HEK293 (cell line): ENCODE measurements at regions of chr3 and their contacts with region 1.

Region 1: GRCh38 chr3:14921078-14921616 is 26.2 kb upstream of the NR2C2 start:
- H3K4me3 ChIP-seq: no peak overlapping the region
- H3K27ac ChIP-seq: no peak overlapping the region
- H3K4me1 ChIP-seq: no peaks in the 10 kb centered on the region
- CTCF ChIP-seq: peak; percentile 98

Region 2: DNA sequence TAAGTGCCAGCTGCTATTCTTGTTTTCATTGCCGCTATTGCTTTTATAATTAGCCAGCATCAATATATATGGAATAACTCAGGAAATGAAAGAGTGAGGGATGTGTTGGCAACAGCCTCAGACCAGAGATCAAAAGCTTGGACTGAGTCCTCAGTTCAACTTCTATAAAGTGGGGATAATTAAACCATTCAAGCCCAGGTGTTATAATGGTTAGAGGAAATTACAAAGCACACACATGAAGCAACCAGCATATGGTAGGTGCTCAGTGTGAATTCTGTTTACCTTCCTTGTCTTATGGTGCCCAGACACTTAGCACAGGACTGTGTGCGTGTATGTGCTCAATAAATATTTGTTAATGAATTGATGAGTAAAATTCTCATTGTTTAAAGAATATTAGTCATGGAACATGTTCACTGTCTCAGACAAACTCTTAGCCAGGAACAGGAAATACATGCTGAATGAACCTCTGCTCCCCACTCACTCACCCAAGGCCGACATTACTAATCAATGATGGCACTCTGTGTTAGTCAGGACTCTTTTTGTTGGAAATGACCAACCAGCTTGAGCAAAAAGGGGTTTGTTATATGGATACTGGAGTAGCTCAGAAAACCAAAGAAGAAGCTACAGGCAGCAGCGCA is 286.3 kb before region 1 on chr3:
- CTCF ChIA-PET with region 1: interaction called, 15 read pairs
- POLR2A ChIA-PET with region 1: no interaction called
- H3K4me3 ChIP-seq: no peak overlapping the region
- H3K27ac ChIP-seq: no peak overlapping the region
- H3K4me1 ChIP-seq: no peaks in the 10 kb centered on the region
- CTCF ChIP-seq: no peak

Region 3: DNA sequence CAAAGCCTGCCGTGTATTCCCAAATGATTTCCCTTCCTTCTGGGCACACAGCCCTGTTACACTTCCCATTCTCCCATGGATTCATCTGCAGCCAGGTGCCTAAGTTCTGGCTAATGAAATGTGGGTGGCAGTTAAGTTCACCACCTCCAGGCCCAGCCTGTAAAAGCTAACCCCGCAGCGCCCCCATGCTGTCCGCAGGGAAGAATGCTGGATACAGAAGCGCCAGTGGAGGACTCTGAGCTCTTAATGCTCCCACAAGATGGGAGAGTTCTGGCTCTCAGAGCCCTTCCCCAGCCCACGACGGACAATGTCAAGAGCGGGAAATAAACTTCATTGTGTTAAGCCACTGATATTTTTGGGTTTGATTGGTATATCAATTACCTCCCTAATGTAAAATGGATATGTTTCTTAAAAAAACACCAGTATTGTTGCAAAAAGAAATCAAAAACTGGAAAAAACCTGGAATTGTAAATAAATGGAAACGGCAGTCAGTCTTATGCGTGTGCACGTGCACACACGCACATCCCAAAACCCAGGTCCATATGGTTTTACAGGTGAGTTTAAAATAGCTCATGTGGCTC is 140.1 kb before region 1 on chr3:
- CTCF ChIA-PET with region 1: interaction called, 17 read pairs
- POLR2A ChIA-PET with region 1: no interaction called
- H3K4me3 ChIP-seq: no peak overlapping the region
- H3K27ac ChIP-seq: no peak overlapping the region
- H3K4me1 ChIP-seq: no peaks in the 10 kb centered on the region
- CTCF ChIP-seq: no peak

Region 4: GRCh38 chr3:14933820-14934425 is 12.8 kb after region 1 on chr3:
- CTCF ChIA-PET with region 1: interaction called, 16 read pairs
- POLR2A ChIA-PET with region 1: no interaction called
- H3K4me3 ChIP-seq: no peak overlapping the region
- H3K27ac ChIP-seq: no peak overlapping the region
- H3K4me1 ChIP-seq: peaks cover 3% of the 10 kb centered on the region; the same call in 1 of the 2 replicates
- CTCF ChIP-seq: no peak

Region 5: GRCh38 chr3:15180042-15180611 is 259.0 kb after region 1 on chr3:
- CTCF ChIA-PET with region 1: no interaction called
- POLR2A ChIA-PET with region 1: no interaction called
- H3K4me3 ChIP-seq: no peak overlapping the region
- H3K27ac ChIP-seq: no peak overlapping the region
- H3K4me1 ChIP-seq: no peaks in the 10 kb centered on the region
- CTCF ChIP-seq: no peak